Lower lobe of right lung (tissue), 2 donors: ENCODE measurements at regions of chr3 and their contacts with region 1.

Region 1: DNA sequence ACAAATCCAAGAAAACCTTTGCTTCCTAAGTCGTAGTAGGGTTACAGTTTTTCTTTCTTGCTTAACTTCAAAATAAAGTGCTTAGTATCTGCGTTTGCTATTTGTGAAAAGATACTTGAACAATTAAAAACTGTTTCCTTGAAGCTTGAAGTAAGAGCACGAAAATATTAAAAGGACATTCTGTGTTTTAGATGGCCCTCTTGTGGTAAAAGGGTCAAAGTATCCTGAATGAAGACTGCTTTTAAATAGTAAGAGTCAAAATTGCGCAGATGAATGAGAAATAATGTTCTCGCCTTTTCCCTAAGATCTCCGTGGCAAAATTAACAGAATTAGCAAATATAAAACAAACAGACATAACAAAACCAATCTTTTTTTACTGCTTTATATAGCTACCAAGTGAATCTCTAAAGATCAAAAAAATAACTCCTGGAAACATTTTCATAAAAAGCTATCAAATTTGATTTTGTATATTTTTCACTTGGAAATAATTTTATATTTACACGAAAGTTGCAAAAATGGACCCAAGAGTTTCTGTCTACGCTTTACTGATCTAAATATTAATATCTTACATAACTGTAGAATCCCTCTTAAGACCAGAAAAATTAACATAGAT is 175.4 kb downstream of the MBNL1 start:
- DNase-seq: no peak
- ATAC-seq: peak; percentile 65 to 78
- H3K4me3 ChIP-seq: no peak overlapping the region
- H3K27ac ChIP-seq: no peak overlapping the region
- H3K4me1 ChIP-seq: peaks cover 45% of the 10 kb centered on the region
- H3K27me3 ChIP-seq: no peaks in the 10 kb centered on the region
- CTCF ChIP-seq: peak; percentile 64

Region 2: DNA sequence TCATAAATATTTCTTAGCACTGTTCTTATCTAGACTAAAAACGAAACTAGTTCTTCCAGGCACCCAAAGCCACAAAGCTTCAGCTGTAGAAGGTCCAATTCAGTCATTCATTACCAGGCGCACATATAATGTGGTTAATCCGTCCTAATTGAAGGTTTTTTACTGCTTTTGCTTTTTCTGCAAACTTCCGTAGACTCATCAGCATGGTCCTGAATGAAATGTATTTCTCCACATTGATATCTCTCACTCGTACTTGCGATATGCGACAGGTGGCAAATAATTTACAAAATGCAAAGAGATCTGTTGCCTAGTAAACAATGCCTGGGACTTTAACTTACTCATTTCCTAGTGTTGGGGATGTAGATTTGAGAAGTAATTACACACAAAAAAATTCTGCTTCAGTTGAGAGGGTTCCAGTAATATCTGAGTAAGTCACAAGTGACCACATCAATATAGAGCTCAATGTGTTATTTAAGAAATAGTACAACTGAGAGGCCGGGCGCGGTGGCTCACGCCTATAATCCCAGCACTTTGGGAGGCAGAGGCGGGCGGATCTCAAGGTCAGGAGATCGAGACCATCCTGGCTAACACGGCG is 250.4 kb before region 1 on chr3:
- intact Hi-C with region 1: loop called (anchors 10 kb)
- DNase-seq: peak; percentile 46
- ATAC-seq: peak; percentile 51 to 54
- H3K4me3 ChIP-seq: peak overlapping the region; percentile 37
- H3K27ac ChIP-seq: peak overlapping the region; percentile 68
- H3K4me1 ChIP-seq: peaks cover 25% of the 10 kb centered on the region
- H3K27me3 ChIP-seq: no peaks in the 10 kb centered on the region
- CTCF ChIP-seq: no peak

Region 3: GRCh38 chr3:152595975-152596790 is 152.0 kb after region 1 on chr3:
- intact Hi-C with region 1: no loop called
- DNase-seq: no peak
- ATAC-seq: peak; percentile 80 to 86
- H3K4me3 ChIP-seq: peak overlapping the region; percentile 5
- H3K27ac ChIP-seq: peak overlapping the region; percentile 72
- H3K4me1 ChIP-seq: peaks cover 22% of the 10 kb centered on the region
- H3K27me3 ChIP-seq: no peaks in the 10 kb centered on the region
- CTCF ChIP-seq: no peak